H1 (cell line): ENCODE measurements at regions of chr11 and their contacts with region 1.

Region 1: GRCh38 chr11:114262681-114263512 is 33.3 kb upstream of the NNMT start:
- DNase-seq: no peak
- H3K4me3 ChIP-seq: no peak overlapping the region
- H3K27ac ChIP-seq: no peak overlapping the region
- H3K4me1 ChIP-seq: no peaks in the 10 kb centered on the region; a peak in 3 of 7 replicates
- H3K27me3 ChIP-seq: no peaks in the 10 kb centered on the region
- CTCF ChIP-seq: peak; percentile 62 to 80 (median 64)
- EP300 ChIP-seq: no peak
- POLR2A ChIP-seq: no peak
- RAD21 ChIP-seq: peak; percentile 88 to 91

Region 2: GRCh38 chr11:113896156-113896879 is 366.6 kb before region 1 on chr11:
- CTCF ChIA-PET with region 1: interaction called, 132 read pairs
- POLR2A ChIA-PET with region 1: no interaction called
- DNase-seq: peak in 1 of 2 experiments; percentile 56
- H3K4me3 ChIP-seq: no peak overlapping the region; a peak in 1 of 8 replicates
- H3K27ac ChIP-seq: no peak overlapping the region
- H3K4me1 ChIP-seq: peaks cover 0 to 13% (median 2%) of the 10 kb centered on the region in 4 experiments; a peak in 4 of 7 replicates
- H3K27me3 ChIP-seq: no peaks in the 10 kb centered on the region
- CTCF ChIP-seq: peak; percentile 58 to 76 (median 71)
- EP300 ChIP-seq: no peak
- POLR2A ChIP-seq: no peak
- RAD21 ChIP-seq: peak; percentile 79 to 81

Region 3: GRCh38 chr11:113994077-113994954 is 268.6 kb before region 1 on chr11:
- CTCF ChIA-PET with region 1: interaction called, 280 read pairs
- POLR2A ChIA-PET with region 1: interaction called, 8 read pairs
- DNase-seq: peak in 1 of 2 experiments; percentile 86
- H3K4me3 ChIP-seq: no peak overlapping the region
- H3K27ac ChIP-seq: no peak overlapping the region
- H3K4me1 ChIP-seq: peaks cover 3 to 10% (median 6%) of the 10 kb centered on the region in 4 experiments
- H3K27me3 ChIP-seq: no peaks in the 10 kb centered on the region
- CTCF ChIP-seq: peak; percentile 62 to 76 (median 64)
- EP300 ChIP-seq: no peak
- POLR2A ChIP-seq: no peak
- RAD21 ChIP-seq: peak; percentile 81 to 86

Region 4: DNA sequence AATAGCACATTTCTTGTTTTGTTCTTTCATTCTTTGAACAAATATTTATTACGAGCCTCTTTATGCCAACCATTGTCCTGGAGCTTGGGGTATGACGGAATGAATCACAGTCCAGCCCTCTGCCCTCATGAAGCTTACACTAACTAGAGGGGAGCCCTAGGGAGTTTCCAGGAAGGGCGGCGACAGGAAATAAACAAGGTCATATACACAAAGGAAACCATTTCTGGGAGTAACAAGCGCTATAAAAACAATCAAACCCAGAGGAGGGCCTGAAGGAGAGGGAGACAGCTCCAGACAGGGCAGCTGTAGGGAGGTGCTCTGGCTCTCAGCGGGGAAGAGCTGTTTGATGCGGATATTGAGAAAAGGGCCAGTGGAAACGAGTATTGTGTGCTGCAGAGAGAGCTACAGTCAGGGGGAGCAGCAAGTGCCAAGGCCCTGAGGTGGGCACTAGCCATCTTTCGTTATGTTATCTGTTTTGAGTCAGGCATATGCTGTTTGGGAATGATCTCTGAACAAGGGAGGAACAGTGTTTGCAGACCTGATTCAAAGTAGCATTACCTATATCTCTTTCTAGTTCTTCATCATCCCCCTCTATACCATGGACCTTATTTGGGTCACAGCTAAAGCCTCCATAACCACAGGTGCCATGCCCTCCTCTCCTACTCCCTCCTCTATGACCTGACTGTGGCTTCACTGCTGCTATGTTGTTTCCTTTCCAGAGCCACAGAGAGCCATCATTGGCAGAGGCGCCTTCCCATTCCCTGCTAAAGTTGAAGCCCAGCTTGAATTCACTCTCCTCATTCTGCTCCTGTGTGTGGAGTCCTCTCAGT is 218.6 kb before region 1 on chr11:
- CTCF ChIA-PET with region 1: interaction called, 183 read pairs
- POLR2A ChIA-PET with region 1: no interaction called
- DNase-seq: no peak
- H3K4me3 ChIP-seq: no peak overlapping the region
- H3K27ac ChIP-seq: no peak overlapping the region
- H3K4me1 ChIP-seq: peaks cover 0 to 7% (median under 1%) of the 10 kb centered on the region in 4 experiments; a peak in 4 of 7 replicates
- H3K27me3 ChIP-seq: no peaks in the 10 kb centered on the region
- CTCF ChIP-seq: no peak
- EP300 ChIP-seq: no peak
- POLR2A ChIP-seq: no peak
- RAD21 ChIP-seq: no peak

Region 5: DNA sequence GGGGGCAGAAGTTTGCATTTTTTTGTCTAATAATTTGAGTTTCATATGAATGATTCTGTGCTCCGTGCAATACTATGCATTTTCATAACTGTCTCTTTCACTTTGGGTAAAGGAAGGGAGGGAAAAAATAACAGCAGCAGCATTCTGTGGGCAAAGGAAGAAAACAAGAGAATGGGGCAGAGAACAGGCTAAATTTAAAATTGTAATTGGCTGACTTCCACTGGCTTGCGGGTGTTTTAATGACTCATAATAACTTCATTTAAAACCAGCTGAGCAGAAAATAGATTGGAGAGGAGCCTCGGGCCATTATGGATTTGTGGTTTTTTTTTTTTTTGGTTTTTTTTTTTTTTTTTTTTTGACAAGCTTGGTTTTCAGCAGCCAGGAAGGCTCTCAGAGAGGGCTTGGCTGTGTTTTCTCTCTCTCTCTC is 96.0 kb before region 1 on chr11:
- CTCF ChIA-PET with region 1: interaction called, 10 read pairs
- POLR2A ChIA-PET with region 1: no interaction called
- DNase-seq: no peak
- H3K4me3 ChIP-seq: no peak overlapping the region
- H3K27ac ChIP-seq: no peak overlapping the region
- H3K4me1 ChIP-seq: peaks cover 0 to 2% (median 0%) of the 10 kb centered on the region in 4 experiments; a peak in 1 of 7 replicates
- H3K27me3 ChIP-seq: no peaks in the 10 kb centered on the region
- CTCF ChIP-seq: no peak
- EP300 ChIP-seq: no peak
- POLR2A ChIP-seq: no peak
- RAD21 ChIP-seq: no peak

Region 6: GRCh38 chr11:114207096-114207495 is 55.8 kb before region 1 on chr11:
- CTCF ChIA-PET with region 1: interaction called, 17 read pairs
- POLR2A ChIA-PET with region 1: no interaction called
- DNase-seq: no peak
- H3K4me3 ChIP-seq: no peak overlapping the region
- H3K27ac ChIP-seq: no peak overlapping the region
- H3K4me1 ChIP-seq: peaks cover 0 to 5% (median 2%) of the 10 kb centered on the region in 4 experiments; a peak in 3 of 7 replicates
- H3K27me3 ChIP-seq: no peaks in the 10 kb centered on the region
- CTCF ChIP-seq: no peak
- EP300 ChIP-seq: no peak
- POLR2A ChIP-seq: no peak
- RAD21 ChIP-seq: no peak

Region 7: GRCh38 chr11:114280696-114281095 is 17.8 kb after region 1 on chr11:
- CTCF ChIA-PET with region 1: interaction called, 123 read pairs
- POLR2A ChIA-PET with region 1: no interaction called
- DNase-seq: peak; percentile 85 to 87
- H3K4me3 ChIP-seq: no peak overlapping the region
- H3K27ac ChIP-seq: no peak overlapping the region
- H3K4me1 ChIP-seq: peaks cover 0 to 4% (median 0%) of the 10 kb centered on the region in 4 experiments; a peak in 2 of 7 replicates
- H3K27me3 ChIP-seq: no peaks in the 10 kb centered on the region
- CTCF ChIP-seq: peak; percentile 67 to 87 (median 87)
- EP300 ChIP-seq: no peak
- POLR2A ChIP-seq: no peak
- RAD21 ChIP-seq: peak; percentile 95 to 98